Posterior cingulate gyrus (tissue), 11 donors: ENCODE measurements at regions of chr16 and their contacts with region 1.

Region 1: GRCh38 chr16:813204-813915 is 12.8 kb upstream of the GNG13 start:
- DNase-seq: peak; percentile 39 to 95 (median 70)

Region 2: GRCh38 chr16:970766-971581 is 157.6 kb after region 1 on chr16 and contains the start of gene LMF1:
- intact Hi-C with region 1: loop called (anchors 5 kb)
- DNase-seq: peak; percentile 92 to 100 (median 96)

Region 3: GRCh38 chr16:982145-983043 is 169.0 kb after region 1 on chr16:
- intact Hi-C with region 1: loop called (anchors 5 kb)
- DNase-seq: peak in 1 of 10 donors; percentile 23

Region 4: DNA sequence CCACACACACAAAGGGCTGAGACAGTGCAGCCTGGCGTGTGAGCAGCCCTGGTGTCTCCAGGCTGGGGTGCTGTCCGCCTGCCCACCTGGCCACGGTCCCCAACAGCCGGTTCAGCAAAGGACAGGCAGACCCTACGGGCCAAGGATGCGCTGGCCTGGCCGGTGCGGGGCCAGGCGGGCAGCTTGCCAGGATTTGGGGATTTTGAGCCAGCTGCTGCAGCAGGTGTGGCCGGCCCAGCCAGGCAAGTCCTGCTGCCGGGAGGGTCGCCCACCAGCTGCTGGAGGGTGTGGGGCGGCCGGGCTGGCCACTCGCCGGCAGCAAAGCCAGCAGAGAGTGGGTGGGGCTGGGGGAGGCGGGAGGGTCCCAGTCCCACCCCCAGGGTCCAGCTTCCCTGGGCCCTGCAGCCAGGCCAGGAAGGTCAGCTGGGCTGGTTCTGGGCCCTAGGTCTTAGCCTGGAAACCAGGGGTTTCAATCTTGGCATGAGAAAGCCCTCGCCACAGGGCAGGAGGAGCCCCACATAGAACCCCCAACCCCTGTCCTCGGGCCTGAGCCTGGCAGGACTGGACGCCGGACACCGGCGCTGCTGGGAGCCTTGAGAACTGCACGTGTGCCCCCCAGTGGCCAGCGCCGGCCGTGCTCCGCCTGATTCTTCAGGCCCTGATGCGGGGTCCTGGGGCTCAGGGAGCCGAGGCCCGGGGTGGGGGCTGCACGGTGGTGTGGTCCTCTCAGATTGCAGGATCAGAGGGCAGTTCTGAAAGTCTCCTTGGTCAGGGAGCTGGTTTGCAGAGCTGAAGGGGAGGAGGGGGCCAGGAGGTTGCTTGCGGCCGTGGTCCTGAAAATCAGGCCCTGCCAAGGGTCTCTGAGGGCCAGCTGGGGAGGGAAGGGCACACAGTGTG is 241.5 kb after region 1 on chr16:
- intact Hi-C with region 1: loop called (anchors 1 kb)
- DNase-seq: peak; percentile 57 to 97 (median 80)